Left ventricle myocardium inferior (tissue), 1 donor: ENCODE measurements at regions of chr3 and their contacts with region 1.

Region 1: DNA sequence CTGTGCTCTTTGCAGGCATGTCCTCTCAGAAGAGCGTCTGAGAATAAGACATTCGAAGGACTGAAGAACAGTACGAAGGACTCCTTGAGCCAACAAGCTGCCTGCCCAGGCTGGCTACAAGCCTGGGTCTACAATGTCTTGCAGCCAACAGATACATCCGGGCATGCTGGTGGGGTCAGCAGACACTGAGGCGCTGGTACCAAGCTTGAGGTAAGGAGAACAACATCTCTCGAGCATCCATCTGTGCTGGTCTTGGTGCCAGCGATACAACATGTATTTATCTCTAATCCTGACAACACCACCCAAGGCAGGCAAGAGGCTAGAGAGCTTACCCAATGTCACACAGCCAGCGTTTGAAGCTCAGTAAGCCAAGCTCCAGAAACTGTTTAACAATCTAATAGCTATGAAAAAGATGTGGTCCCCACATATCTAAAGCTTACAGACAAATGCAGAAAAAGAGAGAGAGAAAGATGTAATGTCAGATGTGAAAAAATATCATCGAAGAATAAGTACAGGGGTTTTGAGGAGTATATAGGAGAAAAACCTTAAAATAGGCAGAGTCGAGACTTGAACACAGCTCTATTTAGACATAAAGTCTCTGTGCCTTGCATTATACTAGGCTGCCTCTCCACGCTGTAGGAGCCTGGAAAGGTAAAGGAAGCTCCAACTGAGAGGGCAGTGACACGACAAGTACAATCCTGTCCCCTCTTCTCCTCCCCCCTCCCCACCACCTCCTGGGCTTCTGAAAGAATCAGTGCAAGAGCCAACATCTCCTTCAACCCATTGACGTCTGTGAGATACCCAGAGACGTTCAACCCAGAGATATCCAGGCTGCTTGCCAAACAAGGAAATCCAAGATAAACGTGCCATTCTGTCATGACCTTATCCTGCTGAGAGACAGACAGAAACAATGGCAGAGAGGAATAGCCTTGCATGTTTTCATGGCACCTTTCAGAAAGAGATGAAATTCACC is 39.4 kb downstream of the WWTR1 start:
- DNase-seq: peak; percentile 29
- H3K4me3 ChIP-seq: no peak overlapping the region
- H3K27ac ChIP-seq: peak overlapping the region; percentile 71
- H3K4me1 ChIP-seq: peaks cover 89% of the 10 kb centered on the region
- H3K27me3 ChIP-seq: no peaks in the 10 kb centered on the region
- CTCF ChIP-seq: no peak

Region 2: GRCh38 chr3:149501524-149501923 is 116.9 kb before region 1 on chr3:
- intact Hi-C with region 1: no loop called
- DNase-seq: no peak
- H3K4me3 ChIP-seq: no peak overlapping the region
- H3K27ac ChIP-seq: no peak overlapping the region
- H3K4me1 ChIP-seq: no peaks in the 10 kb centered on the region
- H3K27me3 ChIP-seq: no peaks in the 10 kb centered on the region
- CTCF ChIP-seq: no peak

Region 3: DNA sequence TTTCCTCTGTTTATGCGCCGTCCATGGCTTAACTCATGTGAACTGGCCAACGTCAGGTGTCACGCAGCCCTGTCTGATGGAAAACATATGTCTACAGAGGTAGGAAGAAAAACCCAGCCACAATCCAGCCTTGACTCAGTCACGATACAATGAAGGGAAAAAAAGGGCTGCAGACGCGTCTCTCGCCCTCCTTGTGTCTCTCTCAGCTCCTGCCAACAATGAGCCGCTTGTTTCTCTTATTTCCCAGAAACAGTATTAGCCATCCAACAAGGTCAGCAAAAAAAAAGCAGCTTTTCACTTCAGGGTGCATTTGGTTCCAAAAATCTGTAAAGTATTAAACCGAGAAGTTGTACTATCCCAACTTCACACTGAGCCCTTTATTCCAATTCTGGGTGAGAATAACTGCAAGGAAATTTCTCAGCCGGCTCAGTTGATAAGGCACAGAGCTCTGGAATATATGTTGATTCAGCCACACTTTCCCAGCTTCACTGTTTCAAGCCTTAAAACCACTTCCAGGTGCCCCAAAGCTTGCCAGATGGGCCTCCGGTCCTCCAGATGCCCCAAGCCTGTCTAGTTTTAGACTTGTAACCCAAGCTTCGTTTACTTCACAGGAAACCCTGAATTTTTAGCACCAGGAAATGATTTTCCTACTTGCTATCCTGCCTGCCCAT is 64.5 kb before region 1 on chr3:
- intact Hi-C with region 1: loop called (anchors 10 kb)
- DNase-seq: peak; percentile 39
- H3K4me3 ChIP-seq: no peak overlapping the region
- H3K27ac ChIP-seq: peak overlapping the region; percentile 81
- H3K4me1 ChIP-seq: peaks cover 70% of the 10 kb centered on the region
- H3K27me3 ChIP-seq: no peaks in the 10 kb centered on the region
- CTCF ChIP-seq: no peak